ENCODE measurements at regions of chr2 and their contacts with region 1.

Region 1: DNA sequence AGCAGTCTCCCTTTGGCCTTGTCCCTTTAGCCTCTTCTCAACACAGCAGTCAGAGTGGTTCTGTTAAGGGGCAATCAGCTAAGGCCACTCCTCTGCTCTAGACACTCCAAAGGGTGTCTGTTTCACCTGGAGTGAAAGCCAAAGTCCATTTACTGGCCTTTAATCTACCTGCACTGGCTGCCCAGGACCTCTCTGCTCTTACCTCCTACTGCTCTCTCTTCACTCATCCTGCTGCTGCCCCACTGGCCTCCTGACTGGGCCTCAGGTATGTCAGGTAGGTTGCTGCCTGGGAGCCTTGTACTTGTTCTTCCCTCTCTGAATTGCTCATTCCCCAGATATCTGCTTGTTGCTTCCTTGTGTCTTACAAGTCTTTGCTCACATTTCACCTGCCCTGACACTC is 68.2 kb downstream of the PIKFYVE start:
- DNase-seq: no peak
- ATAC-seq: no peak
- H3K4me3 ChIP-seq: no peak overlapping the region
- H3K27ac ChIP-seq: no peak overlapping the region
- H3K4me1 ChIP-seq: no peaks in the 10 kb centered on the region
- H3K27me3 ChIP-seq: no peaks in the 10 kb centered on the region
- CTCF ChIP-seq: no peak
- POLR2A ChIP-seq: no peak
- RAD21 ChIP-seq: no peak

Region 2: DNA sequence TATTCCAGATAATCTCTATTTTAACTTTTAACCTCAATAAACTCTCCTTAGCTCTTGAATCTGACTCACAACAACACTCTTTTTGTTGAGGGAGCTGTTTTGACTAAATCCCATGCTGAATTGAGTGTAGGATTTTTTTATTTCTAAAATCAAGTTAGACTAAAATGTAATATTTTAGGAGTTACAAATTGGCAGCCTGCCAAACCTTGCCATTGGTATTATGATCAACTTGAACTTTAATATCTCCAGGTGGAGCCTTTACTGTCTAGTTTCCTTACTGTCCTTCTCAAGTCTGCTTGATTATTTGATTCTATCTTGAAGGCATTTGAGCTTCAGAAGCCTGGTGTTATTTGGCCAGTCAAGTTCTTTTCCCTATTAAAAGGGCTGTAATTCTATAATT is 59.5 kb before region 1 on chr2:
- CTCF ChIA-PET with region 1: no interaction called
- POLR2A ChIA-PET with region 1: no interaction called
- dilution Hi-C with region 1: no loop called
- in situ Hi-C with region 1: no loop called
- intact Hi-C with region 1: loop called (anchors 10 kb)
- DNase-seq: no peak
- ATAC-seq: no peak
- H3K4me3 ChIP-seq: no peak overlapping the region
- H3K27ac ChIP-seq: no peak overlapping the region
- H3K4me1 ChIP-seq: no peaks in the 10 kb centered on the region
- H3K27me3 ChIP-seq: no peaks in the 10 kb centered on the region
- CTCF ChIP-seq: no peak
- POLR2A ChIP-seq: no peak
- RAD21 ChIP-seq: no peak

Region 3: GRCh38 chr2:208300847-208301618 is 33.2 kb before region 1 on chr2:
- CTCF ChIA-PET with region 1: no interaction called
- POLR2A ChIA-PET with region 1: no interaction called
- dilution Hi-C with region 1: no loop called
- in situ Hi-C with region 1: no loop called
- intact Hi-C with region 1: loop called (anchors 5 kb)
- DNase-seq: no peak
- ATAC-seq: no peak
- H3K4me3 ChIP-seq: no peak overlapping the region
- H3K27ac ChIP-seq: no peak overlapping the region
- H3K4me1 ChIP-seq: no peaks in the 10 kb centered on the region; the same call in 1 of the 2 replicates
- H3K27me3 ChIP-seq: no peaks in the 10 kb centered on the region
- CTCF ChIP-seq: no peak
- POLR2A ChIP-seq: no peak
- RAD21 ChIP-seq: no peak

Region 4: GRCh38 chr2:208350610-208351009 is 16.4 kb after region 1 on chr2:
- CTCF ChIA-PET with region 1: no interaction called
- POLR2A ChIA-PET with region 1: no interaction called
- dilution Hi-C with region 1: no loop called
- in situ Hi-C with region 1: no loop called
- intact Hi-C with region 1: loop called (anchors 2 kb)
- DNase-seq: peak; percentile 89
- ATAC-seq: peak; percentile 91
- H3K4me3 ChIP-seq: no peak overlapping the region
- H3K27ac ChIP-seq: peak overlapping the region; percentile 1; the same call in 1 of the 2 replicates
- H3K4me1 ChIP-seq: no peaks in the 10 kb centered on the region
- H3K27me3 ChIP-seq: no peaks in the 10 kb centered on the region
- CTCF ChIP-seq: no peak
- POLR2A ChIP-seq: no peak
- RAD21 ChIP-seq: no peak

Measured in IMR-90 (cell line).